ENCODE measurements at regions of chr22 and their contacts with region 1.

Region 1: DNA sequence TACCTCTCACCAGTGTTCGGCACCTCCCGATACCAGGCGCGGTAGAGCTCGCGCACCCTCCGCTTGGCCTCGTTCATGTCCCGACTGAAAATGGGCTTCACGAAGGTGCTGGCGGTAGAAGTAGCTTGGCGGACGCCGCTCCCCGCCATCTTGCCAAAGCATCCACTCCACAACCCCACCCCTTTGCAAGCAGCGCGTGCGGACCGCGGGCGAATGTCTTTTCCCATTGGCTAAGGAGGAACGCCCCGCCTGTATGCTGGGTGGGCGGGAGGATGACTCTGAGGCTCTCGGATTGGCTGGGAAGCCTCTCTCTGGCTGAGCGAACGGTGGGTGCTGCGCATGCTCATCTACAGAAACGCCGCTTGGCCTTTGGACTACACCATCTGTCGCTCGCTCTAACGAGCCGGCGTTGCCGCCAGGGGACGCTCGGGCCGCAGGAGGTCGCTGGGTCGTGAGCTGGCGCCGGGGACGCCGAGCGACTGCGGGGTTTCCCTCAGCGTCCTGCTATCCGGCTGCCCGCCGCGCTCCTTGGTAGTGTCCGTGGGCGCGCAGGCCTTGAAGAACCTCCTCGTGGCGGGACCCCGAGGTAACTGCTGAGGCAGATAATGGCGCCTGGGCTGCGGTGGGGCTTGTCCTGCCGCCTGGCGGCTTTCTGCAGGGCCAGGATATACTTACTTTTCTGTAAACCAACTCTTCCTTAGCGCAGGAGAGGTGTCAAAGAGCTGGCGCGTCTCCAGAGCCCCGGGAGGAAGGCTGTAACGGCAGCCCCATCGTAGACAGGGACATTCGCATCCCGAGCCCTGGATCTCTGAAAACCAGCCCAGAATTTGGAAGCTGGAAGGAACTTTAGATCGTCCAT is at the start of gene NDUFA6:
- DNase-seq: peak; percentile 100
- H3K4me3 ChIP-seq: peak within 1 kb of the TSS; percentile 51 to 77 (median 72)
- H3K27ac ChIP-seq: peak within 1 kb of the TSS; percentile 69
- H3K4me1 ChIP-seq: peaks cover 8% of the 10 kb centered on the region
- H3K27me3 ChIP-seq: no peaks in the 10 kb centered on the region
- CTCF ChIP-seq: peak; percentile 91 to 97
- POLR2A ChIP-seq: peak; percentile 88
- total RNA-seq, gene NDUFA6: 84.9 and 95.7 TPM in 2 replicates

Region 2: GRCh38 chr22:41966607-41967240 is 124.1 kb before region 1 on chr22:
- CTCF ChIA-PET with region 1: interaction called, 27 read pairs
- POLR2A ChIA-PET with region 1: no interaction called
- dilution Hi-C with region 1: no loop called
- intact Hi-C with region 1: loop called (anchors 1 kb)
- DNase-seq: peak; percentile 72
- H3K4me3 ChIP-seq: no peak overlapping the region
- H3K27ac ChIP-seq: no peak overlapping the region
- H3K4me1 ChIP-seq: peaks cover 4% of the 10 kb centered on the region
- H3K27me3 ChIP-seq: no peaks in the 10 kb centered on the region
- CTCF ChIP-seq: peak; percentile 34 to 48
- POLR2A ChIP-seq: no peak

Region 3: DNA sequence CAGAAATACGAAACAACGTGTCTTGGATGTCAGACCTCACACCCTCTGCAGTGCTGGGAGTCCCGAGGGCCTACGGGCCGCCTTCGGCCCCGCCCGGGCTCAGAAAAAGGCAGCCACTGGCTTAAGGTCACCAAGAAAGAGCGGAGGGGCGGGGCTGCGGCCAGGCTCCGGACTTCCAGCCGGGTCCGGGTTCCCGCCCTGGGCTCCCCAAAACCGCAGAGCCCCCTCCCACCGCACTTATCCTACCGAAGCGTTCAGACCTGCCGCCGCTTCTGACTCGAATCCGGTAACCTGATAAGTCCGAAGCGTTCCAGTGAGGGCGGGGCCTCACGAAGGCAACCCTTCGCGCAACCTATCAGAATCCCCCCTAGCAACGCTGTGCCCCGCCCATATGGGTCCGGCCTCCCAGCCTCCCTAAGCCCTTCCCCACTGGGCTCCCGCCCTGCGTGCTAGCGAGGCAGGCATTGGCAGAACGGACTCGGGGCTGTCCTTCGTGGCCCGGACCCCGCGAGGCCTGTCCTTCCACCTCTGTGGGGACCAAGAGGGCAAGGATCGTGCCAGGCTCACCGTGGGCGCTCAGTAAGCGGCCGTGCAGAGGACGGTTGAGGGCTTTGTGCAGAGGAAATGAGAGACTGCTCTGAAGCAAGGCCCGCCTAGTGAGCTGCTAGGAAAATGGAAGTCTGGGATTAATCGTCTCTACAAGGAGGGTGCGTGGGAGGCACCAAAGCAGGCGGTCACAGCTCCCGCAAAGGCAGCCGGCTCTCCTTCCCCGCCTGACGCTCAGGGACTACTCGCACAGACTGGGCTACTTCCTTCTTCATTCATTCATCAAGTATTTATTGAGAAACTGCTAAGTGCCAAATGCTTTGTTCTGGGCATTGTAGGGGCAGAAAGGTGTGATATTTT is 20.1 kb before region 1 on chr22 and contains the start of gene NAGA:
- CTCF ChIA-PET with region 1: interaction called, 13 read pairs
- POLR2A ChIA-PET with region 1: interaction called, 4 read pairs
- dilution Hi-C with region 1: no loop called
- intact Hi-C with region 1: loop called (anchors 1 kb)
- DNase-seq: peak; percentile 97
- H3K4me3 ChIP-seq: peak within 1 kb of the TSS; percentile 26 to 60 (median 54)
- H3K27ac ChIP-seq: peak within 1 kb of the TSS; percentile 30
- H3K4me1 ChIP-seq: peaks cover 23% of the 10 kb centered on the region
- H3K27me3 ChIP-seq: no peaks in the 10 kb centered on the region
- CTCF ChIP-seq: no peak
- POLR2A ChIP-seq: peak; percentile 65
- total RNA-seq, gene NAGA: 29.0 and 33.1 TPM in 2 replicates

Region 4: DNA sequence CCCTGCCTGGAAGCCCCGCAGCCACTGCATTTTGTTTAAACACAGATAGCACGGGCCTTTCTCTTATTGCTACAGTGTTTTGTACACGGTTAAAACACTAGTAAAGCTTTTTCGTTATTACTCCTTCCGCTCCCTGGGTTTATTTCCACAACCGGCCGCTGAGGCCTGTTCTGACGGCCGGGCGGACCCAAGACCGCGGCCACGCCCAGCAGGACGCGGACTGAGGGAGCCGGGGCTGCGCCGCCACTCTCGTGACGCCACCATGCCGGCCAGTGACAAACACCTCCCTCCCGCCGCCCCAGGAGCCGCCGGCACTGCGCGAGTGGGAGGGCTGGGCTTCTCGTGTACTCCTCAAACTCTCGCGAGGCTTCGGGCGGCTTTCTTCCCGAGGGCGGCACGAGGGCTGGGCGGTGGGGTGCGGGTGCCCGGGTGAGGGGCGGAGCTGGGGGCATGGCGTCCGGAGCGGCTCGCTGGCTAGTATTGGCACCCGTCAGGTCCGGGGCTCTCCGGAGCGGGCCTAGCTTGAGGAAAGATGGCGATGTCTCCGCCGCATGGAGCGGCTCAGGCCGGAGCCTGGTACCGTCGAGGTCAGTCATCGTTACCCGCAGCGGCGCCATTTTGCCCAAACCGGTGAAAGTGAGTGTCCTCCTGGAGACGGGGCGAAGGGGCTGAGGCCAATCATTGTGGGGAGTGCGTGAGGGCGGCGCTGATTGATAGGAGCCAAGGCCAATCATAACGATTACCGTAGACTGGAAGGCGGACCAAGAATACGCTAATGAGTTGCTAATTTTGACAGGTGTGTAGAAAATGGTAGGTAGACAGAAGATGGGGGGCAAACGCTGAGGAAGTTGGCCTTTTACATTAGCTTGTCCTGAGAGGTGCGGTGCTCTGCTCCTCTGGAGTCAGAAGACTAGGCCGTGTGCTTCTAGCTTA is 11.2 kb before region 1 on chr22 and contains the start of gene SMDT1:
- CTCF ChIA-PET with region 1: interaction called, 26 read pairs
- POLR2A ChIA-PET with region 1: interaction called, 5 read pairs
- dilution Hi-C with region 1: no loop called
- intact Hi-C with region 1: loop called (anchors 1 kb)
- DNase-seq: peak; percentile 98
- H3K4me3 ChIP-seq: peak within 1 kb of the TSS; percentile 59 to 96 (median 79)
- H3K27ac ChIP-seq: peak within 1 kb of the TSS; percentile 84
- H3K4me1 ChIP-seq: peaks cover 17% of the 10 kb centered on the region
- H3K27me3 ChIP-seq: no peaks in the 10 kb centered on the region
- CTCF ChIP-seq: no peak
- POLR2A ChIP-seq: peak; percentile 82
- total RNA-seq, gene SMDT1: 61.2 and 64.8 TPM in 2 replicates

Region 5: GRCh38 chr22:42114721-42115120 is 23.9 kb after region 1 on chr22:
- CTCF ChIA-PET with region 1: interaction called, 71 read pairs
- POLR2A ChIA-PET with region 1: interaction called, 7 read pairs
- dilution Hi-C with region 1: no loop called
- intact Hi-C with region 1: loop called (anchors 1 kb)
- DNase-seq: peak; percentile 41
- H3K4me3 ChIP-seq: no peak overlapping the region
- H3K27ac ChIP-seq: no peak overlapping the region
- H3K4me1 ChIP-seq: no peaks in the 10 kb centered on the region
- H3K27me3 ChIP-seq: no peaks in the 10 kb centered on the region
- CTCF ChIP-seq: peak; percentile 32 to 56
- POLR2A ChIP-seq: no peak

Measured in endothelial cell of umbilical vein (primary cell).